ENCODE measurements at regions of chr17 and their contacts with region 1.

Region 1: GRCh38 chr17:64320613-64321553 is 57.8 kb upstream of the TEX2 start:
- DNase-seq: peak in 8 of 9 experiments; percentile 38 to 76 (median 59)
- ATAC-seq: peak; percentile 68
- H3K4me3 ChIP-seq: no peak overlapping the region
- H3K4me3 Mint-ChIP-seq: peak overlapping the region; percentile 39
- H3K27ac ChIP-seq: peak overlapping the region in 1 of 2 experiments; percentile 33
- H3K27ac Mint-ChIP-seq: peak overlapping the region; percentile 88
- H3K4me1 ChIP-seq: no peaks in the 10 kb centered on the region
- H3K4me1 Mint-ChIP-seq: peaks cover 38% of the 10 kb centered on the region
- H3K27me3 ChIP-seq: no peaks in the 10 kb centered on the region
- H3K27me3 Mint-ChIP-seq: no peaks in the 10 kb centered on the region
- CTCF ChIP-seq: peak; percentile 84

Region 2: GRCh38 chr17:63816669-63817068 is 504.2 kb before region 1 on chr17:
- CTCF ChIA-PET with region 1: no interaction called
- POLR2A ChIA-PET with region 1: no interaction called
- intact Hi-C with region 1: no loop called
- DNase-seq: no peak
- ATAC-seq: no peak
- H3K4me3 ChIP-seq: no peak overlapping the region
- H3K4me3 Mint-ChIP-seq: no peak overlapping the region
- H3K27ac ChIP-seq: no peak overlapping the region
- H3K27ac Mint-ChIP-seq: no peak overlapping the region
- H3K4me1 ChIP-seq: no peaks in the 10 kb centered on the region
- H3K4me1 Mint-ChIP-seq: peaks cover 6% of the 10 kb centered on the region
- H3K27me3 ChIP-seq: no peaks in the 10 kb centered on the region
- H3K27me3 Mint-ChIP-seq: no peaks in the 10 kb centered on the region
- CTCF ChIP-seq: no peak

Region 3: DNA sequence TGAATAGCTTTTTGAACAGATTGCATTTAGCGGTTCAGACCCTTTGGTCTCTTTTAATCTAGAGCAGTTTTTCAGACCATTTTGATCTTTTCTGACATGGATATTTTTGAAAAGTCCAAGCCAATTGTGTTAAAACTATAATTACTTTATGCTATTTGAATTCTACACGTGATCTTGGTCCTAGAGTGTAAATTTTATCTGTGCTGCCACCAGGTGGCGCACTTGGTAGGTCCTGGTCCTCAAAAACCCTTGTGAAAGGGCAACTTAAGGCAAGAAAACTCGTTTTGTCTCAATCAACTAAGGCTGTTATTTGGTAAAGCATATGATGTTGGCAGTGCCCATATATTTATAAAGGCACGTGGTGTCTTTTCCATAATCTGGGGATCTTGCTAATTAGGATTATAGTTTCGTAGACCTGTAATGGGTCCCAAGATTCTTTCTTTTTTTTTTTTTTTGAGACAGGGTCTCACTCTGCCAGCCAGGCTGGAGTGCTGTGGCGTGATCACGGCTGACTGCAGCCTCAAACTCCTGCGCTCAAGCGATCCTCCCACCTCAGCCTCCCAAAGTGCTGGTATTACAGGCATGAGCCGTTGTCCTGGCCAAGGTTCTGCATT is 13.9 kb before region 1 on chr17:
- CTCF ChIA-PET with region 1: interaction called, 20 read pairs
- POLR2A ChIA-PET with region 1: interaction called, 3 read pairs
- intact Hi-C with region 1: no loop called
- DNase-seq: peak; percentile 31 to 83 (median 71)
- ATAC-seq: peak; percentile 57
- H3K4me3 ChIP-seq: no peak overlapping the region
- H3K4me3 Mint-ChIP-seq: no peak overlapping the region
- H3K27ac ChIP-seq: no peak overlapping the region
- H3K27ac Mint-ChIP-seq: no peak overlapping the region
- H3K4me1 ChIP-seq: no peaks in the 10 kb centered on the region
- H3K4me1 Mint-ChIP-seq: peaks cover 2% of the 10 kb centered on the region
- H3K27me3 ChIP-seq: no peaks in the 10 kb centered on the region
- H3K27me3 Mint-ChIP-seq: peaks cover 2% of the 10 kb centered on the region
- CTCF ChIP-seq: peak; percentile 95

Region 4: GRCh38 chr17:64369007-64369893 is 48.4 kb after region 1 on chr17:
- CTCF ChIA-PET with region 1: no interaction called
- POLR2A ChIA-PET with region 1: no interaction called
- intact Hi-C with region 1: no loop called
- DNase-seq: no peak
- ATAC-seq: peak; percentile 26
- H3K4me3 ChIP-seq: no peak overlapping the region
- H3K4me3 Mint-ChIP-seq: no peak overlapping the region
- H3K27ac ChIP-seq: no peak overlapping the region
- H3K27ac Mint-ChIP-seq: peak overlapping the region; percentile 78
- H3K4me1 ChIP-seq: peaks cover 9% of the 10 kb centered on the region
- H3K4me1 Mint-ChIP-seq: peaks cover 30% of the 10 kb centered on the region
- H3K27me3 ChIP-seq: no peaks in the 10 kb centered on the region
- H3K27me3 Mint-ChIP-seq: no peaks in the 10 kb centered on the region
- CTCF ChIP-seq: no peak

Measured in CD8-positive, alpha-beta T cell (primary cell).